CD8-positive, alpha-beta T cell (primary cell): ENCODE measurements at regions of chr4 and their contacts with region 1.

Region 1: DNA sequence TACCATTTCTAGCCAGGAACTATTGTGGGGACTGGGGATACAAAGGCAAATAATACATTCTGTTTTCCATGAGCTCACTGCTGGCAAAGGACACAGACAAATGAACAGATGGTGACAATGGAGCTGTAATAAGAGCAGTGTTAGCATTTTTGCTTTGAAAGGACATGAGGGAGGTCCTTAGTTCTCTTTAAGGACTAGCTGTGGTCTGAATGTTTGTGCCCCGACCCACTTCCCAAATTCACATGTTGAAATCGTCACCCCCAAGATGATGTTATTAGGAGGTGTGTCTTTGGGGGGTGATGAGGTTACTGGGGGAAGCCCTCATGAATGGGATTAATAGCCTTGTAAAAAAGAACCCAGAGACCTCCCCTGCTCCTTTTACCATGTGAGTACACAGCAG is 30.3 kb downstream of the CCNG2 start:
- DNase-seq: no peak
- ATAC-seq: no peak
- H3K4me3 ChIP-seq: no peak overlapping the region
- H3K4me3 Mint-ChIP-seq: no peak overlapping the region
- H3K27ac ChIP-seq: no peak overlapping the region
- H3K27ac Mint-ChIP-seq: no peak overlapping the region
- H3K4me1 ChIP-seq: no peaks in the 10 kb centered on the region
- H3K4me1 Mint-ChIP-seq: peaks cover 2% of the 10 kb centered on the region
- H3K27me3 ChIP-seq: no peaks in the 10 kb centered on the region
- H3K27me3 Mint-ChIP-seq: peaks cover 4% of the 10 kb centered on the region
- CTCF ChIP-seq: no peak

Region 2: DNA sequence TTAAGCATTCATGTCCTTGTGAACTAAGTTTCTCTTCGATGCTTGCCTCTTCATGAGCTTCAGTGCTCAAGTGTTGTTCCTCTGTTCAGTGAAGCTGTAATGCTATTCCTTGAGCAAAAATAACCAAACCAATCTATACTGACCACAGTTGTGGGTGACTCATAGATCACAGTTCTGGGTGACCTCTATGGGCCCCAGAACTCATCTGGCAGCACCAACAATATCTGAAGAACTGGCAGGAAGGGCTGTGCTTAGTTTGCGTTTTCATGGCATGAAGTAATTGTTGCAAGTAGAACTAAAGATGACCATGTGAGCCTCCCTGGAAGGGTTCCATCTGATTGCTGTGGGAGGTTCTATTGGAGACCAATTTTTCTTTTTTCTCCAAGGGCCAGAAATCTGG is 75.9 kb after region 1 on chr4:
- CTCF ChIA-PET with region 1: no interaction called
- POLR2A ChIA-PET with region 1: no interaction called
- intact Hi-C with region 1: no loop called
- DNase-seq: no peak
- ATAC-seq: no peak
- H3K4me3 ChIP-seq: no peak overlapping the region
- H3K4me3 Mint-ChIP-seq: no peak overlapping the region
- H3K27ac ChIP-seq: no peak overlapping the region
- H3K27ac Mint-ChIP-seq: no peak overlapping the region
- H3K4me1 ChIP-seq: no peaks in the 10 kb centered on the region
- H3K4me1 Mint-ChIP-seq: no peaks in the 10 kb centered on the region
- H3K27me3 ChIP-seq: no peaks in the 10 kb centered on the region
- H3K27me3 Mint-ChIP-seq: no peaks in the 10 kb centered on the region
- CTCF ChIP-seq: no peak

Region 3: DNA sequence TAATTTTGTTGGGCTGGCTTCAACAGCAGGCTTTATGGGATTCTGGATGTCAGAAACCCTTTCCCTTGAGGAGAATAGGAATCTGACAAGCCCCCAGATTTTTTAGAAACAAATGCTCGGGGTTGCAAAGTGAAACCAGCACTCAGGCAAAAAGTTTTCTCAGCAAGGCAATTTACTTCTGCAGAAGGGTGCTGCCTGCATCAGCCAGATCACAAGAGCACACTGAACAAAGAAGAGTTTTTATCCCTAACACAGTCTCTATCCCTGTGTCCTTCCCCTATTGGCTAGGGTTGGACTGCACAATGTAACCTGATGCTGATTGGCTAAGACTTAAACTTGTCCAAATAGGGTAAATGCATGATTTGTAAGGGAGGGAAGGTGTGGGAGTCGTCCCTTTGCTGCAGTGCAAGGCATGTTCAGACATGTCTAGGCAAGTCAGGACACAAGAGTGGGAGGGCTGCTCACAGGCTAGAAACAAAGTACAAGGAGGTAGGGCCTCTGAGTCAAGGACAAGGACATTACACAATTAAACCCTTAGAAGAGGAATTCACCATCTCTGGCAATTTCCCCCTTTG is 145.5 kb after region 1 on chr4:
- CTCF ChIA-PET with region 1: no interaction called
- POLR2A ChIA-PET with region 1: no interaction called
- intact Hi-C with region 1: no loop called
- DNase-seq: no peak
- ATAC-seq: no peak
- H3K4me3 ChIP-seq: no peak overlapping the region
- H3K4me3 Mint-ChIP-seq: no peak overlapping the region
- H3K27ac ChIP-seq: no peak overlapping the region
- H3K27ac Mint-ChIP-seq: no peak overlapping the region
- H3K4me1 ChIP-seq: no peaks in the 10 kb centered on the region
- H3K4me1 Mint-ChIP-seq: no peaks in the 10 kb centered on the region
- H3K27me3 ChIP-seq: no peaks in the 10 kb centered on the region
- H3K27me3 Mint-ChIP-seq: peaks cover 19% of the 10 kb centered on the region
- CTCF ChIP-seq: no peak

Region 4: GRCh38 chr4:78691971-78692821 is 1504.9 kb after region 1 on chr4:
- CTCF ChIA-PET with region 1: no interaction called
- POLR2A ChIA-PET with region 1: no interaction called
- intact Hi-C with region 1: loop called in 1 of 2 experiments (anchors 10 kb)
- DNase-seq: peak in 1 of 9 experiments; percentile 2
- ATAC-seq: no peak
- H3K4me3 ChIP-seq: no peak overlapping the region
- H3K4me3 Mint-ChIP-seq: no peak overlapping the region
- H3K27ac ChIP-seq: no peak overlapping the region
- H3K27ac Mint-ChIP-seq: no peak overlapping the region
- H3K4me1 ChIP-seq: no peaks in the 10 kb centered on the region
- H3K4me1 Mint-ChIP-seq: no peaks in the 10 kb centered on the region
- H3K27me3 ChIP-seq: no peaks in the 10 kb centered on the region
- H3K27me3 Mint-ChIP-seq: no peaks in the 10 kb centered on the region
- CTCF ChIP-seq: no peak